ENCODE measurements at regions of chr15 and their contacts with region 1.

Region 1: DNA sequence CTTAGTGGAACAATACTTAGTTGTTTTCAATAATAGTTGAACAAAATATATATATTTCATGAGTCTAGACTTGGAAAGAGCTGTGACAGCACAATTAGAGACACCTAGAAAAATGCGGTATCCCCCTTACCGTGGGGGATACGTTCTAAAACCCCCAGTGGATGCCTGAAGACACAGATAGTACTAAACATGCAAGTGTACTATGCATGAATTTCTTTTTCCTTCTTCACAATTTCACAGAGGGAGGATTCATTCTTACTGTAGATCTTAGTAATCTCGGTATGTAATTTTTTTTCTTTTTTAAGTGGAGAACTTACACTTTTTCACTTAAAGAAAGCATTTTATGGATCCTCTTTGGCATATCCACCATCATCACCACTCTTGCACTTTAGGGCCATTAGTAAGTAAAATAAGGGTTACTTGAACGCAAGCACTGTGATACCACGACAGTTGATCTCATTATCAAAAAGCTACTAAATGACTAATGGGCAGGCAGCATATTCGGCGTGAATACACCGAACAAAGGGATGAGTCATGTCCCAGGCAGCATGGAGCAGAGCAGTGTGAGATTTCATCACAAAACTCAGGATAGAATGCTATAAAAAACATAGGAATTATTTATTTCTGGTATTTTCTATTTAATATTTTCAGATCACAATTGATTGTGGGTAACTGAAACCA is 72.3 kb upstream of the ZNF280D start:
- DNase-seq: peak; percentile 46
- ATAC-seq: peak; percentile 97
- H3K4me3 Mint-ChIP-seq: no peak overlapping the region
- H3K27ac Mint-ChIP-seq: no peak overlapping the region
- H3K4me1 Mint-ChIP-seq: peaks cover 5% of the 10 kb centered on the region
- H3K27me3 Mint-ChIP-seq: peaks cover 4% of the 10 kb centered on the region

Region 2: DNA sequence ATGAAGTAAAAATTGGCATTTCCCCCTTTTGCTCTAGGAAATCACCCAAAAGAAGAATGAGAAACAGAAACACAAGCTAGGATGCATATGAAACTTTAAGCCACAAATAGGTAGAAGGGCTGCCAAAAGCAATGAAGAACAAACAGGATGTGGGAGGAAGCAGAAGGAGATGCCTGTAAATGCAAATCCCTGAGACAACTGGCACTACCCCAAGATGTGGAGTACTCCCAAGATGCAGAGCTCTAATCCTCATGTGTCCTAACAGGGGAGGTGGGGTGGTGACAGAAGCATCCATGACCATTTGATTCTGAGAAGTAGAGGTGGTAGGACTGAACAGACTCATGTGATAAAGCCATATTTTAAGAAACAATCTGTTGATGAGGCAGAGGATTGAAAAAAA is 40.4 kb before region 1 on chr15:
- CTCF ChIA-PET with region 1: no interaction called
- POLR2A ChIA-PET with region 1: no interaction called
- intact Hi-C with region 1: loop called in 1 of 2 experiments (anchors 5 kb)
- DNase-seq: no peak
- ATAC-seq: peak; percentile 43
- H3K4me3 Mint-ChIP-seq: no peak overlapping the region
- H3K27ac Mint-ChIP-seq: no peak overlapping the region
- H3K4me1 Mint-ChIP-seq: peaks cover 21% of the 10 kb centered on the region
- H3K27me3 Mint-ChIP-seq: no peaks in the 10 kb centered on the region

Region 3: DNA sequence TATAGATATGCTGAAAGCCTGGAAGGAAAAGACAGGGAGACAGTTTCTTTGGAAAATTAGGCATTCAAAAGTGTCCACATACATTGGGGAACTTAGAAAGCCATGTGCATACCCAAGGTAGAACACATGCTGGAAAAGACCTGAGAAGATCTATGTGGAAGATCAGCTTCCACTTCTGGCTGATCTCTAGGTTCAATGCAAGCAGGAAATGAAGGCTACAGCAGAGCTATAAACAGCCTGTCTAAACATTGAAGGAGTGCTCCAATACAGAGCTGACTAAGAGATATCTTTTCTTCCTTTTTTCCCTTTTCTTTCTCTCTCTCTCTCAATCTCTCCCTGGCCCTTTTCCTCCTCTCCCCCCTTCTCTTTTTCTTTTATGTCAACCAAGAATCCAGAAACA is 39.3 kb after region 1 on chr15:
- CTCF ChIA-PET with region 1: no interaction called
- POLR2A ChIA-PET with region 1: no interaction called
- intact Hi-C with region 1: loop called in 1 of 2 experiments (anchors 1 kb)
- DNase-seq: no peak
- ATAC-seq: no peak
- H3K4me3 Mint-ChIP-seq: no peak overlapping the region
- H3K27ac Mint-ChIP-seq: no peak overlapping the region
- H3K4me1 Mint-ChIP-seq: no peaks in the 10 kb centered on the region
- H3K27me3 Mint-ChIP-seq: no peaks in the 10 kb centered on the region